PC-9 (cell line): ENCODE measurements at regions of chr3 and their contacts with region 1.

Region 1: GRCh38 chr3:192566706-192567290 is 160.5 kb downstream of the FGF12 start:
- DNase-seq: peak; percentile 73 to 79
- H3K4me3 ChIP-seq: no peak overlapping the region
- H3K27ac ChIP-seq: no peak overlapping the region
- H3K4me1 ChIP-seq: peaks cover 4% of the 10 kb centered on the region; the same call in 1 of the 2 replicates
- H3K27me3 ChIP-seq: no peaks in the 10 kb centered on the region
- CTCF ChIP-seq: peak; percentile 95

Region 2: DNA sequence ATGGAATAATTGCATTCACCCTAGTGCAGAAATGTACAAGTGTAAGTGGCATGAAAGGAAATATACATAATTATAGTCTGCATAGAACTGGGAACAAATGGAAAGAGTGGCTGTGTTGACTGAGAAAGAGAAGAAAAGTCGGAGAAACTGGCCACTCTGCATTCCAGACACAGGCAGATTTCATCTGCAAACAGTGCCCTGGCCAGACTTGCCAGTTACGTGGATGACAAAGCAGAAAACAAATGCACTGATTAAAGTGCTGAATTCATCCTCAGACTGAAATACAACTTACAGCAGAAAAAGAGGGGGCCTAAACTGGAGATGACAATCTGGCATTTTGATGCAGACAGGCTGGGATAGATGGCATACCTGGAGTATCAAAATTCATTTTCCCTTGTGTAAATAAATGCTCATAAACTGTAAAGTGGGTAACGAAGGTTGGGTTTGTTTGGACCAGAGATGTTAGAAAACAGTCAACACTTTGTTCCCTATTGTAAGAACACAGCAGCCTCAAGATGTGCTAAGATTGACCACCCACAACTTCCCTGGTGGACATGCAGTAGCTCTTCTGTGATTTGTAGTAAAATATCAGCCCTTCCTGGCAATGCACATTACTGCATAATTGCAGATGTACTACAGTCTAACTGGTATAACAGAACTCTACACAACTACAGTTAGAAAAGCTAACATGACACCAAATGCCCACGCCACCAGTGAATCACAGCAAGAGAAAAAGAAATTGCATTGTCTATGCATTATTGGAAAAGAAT is 30.9 kb after region 1 on chr3:
- CTCF ChIA-PET with region 1: no interaction called
- POLR2A ChIA-PET with region 1: no interaction called
- intact Hi-C with region 1: loop called (anchors 1 kb)
- DNase-seq: peak; percentile 84 to 92
- H3K4me3 ChIP-seq: peak overlapping the region; percentile 40
- H3K27ac ChIP-seq: peak overlapping the region; percentile 91
- H3K4me1 ChIP-seq: peaks cover 29% of the 10 kb centered on the region
- H3K27me3 ChIP-seq: no peaks in the 10 kb centered on the region
- CTCF ChIP-seq: no peak

Region 3: DNA sequence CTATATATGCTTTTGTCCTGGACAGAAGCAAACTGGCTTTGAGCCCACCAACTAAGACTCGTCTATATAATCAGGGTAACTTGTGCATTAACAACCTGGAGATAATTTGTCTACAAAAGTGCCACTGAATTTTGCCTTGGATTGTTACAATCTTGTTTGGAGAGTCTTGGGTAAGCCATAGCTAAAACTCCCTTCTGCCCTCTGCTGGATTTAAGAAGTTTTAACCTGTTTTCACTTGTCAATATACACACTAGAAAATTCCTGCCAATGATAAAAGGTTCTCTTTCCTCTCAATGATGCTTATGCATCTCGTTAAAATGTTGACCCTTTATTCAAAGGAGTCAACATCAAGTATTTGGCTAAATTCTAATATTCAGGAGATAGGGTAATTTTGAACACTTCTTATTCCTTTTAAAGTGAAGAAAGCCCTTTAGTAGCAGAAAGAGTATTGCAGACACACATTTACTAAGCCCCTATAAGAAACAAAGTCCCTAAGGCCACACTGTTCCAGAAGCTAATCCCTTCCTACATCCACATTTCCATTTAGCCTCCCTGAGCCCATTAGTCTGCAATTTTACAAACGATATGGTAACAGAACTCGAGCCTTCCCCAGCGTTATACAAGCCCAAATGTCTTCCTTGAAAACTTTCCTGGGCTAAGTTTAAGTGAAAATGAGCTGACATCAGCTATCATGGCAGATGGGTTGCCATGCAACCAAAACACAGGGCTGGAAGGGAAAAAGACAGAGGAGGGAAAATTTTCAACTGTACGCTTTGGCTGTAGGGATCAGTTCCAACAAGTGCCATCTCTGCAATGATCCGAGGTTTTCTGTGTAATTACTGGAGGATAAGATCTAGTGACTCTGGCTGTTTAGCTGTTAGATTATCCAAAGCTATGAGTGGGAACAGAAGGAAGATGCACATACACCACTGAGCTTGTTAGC is 236.4 kb after region 1 on chr3:
- CTCF ChIA-PET with region 1: no interaction called
- POLR2A ChIA-PET with region 1: no interaction called
- intact Hi-C with region 1: loop called (anchors 1 kb)
- DNase-seq: peak in 1 of 2 experiments; percentile 45
- H3K4me3 ChIP-seq: no peak overlapping the region
- H3K27ac ChIP-seq: no peak overlapping the region
- H3K4me1 ChIP-seq: no peaks in the 10 kb centered on the region
- H3K27me3 ChIP-seq: no peaks in the 10 kb centered on the region
- CTCF ChIP-seq: peak; percentile 88

Region 4: GRCh38 chr3:193040836-193041672 is 474.3 kb after region 1 on chr3:
- CTCF ChIA-PET with region 1: no interaction called
- POLR2A ChIA-PET with region 1: no interaction called
- intact Hi-C with region 1: loop called (anchors 1 kb)
- DNase-seq: peak in 1 of 2 experiments; percentile 58
- H3K4me3 ChIP-seq: no peak overlapping the region
- H3K27ac ChIP-seq: no peak overlapping the region
- H3K4me1 ChIP-seq: no peaks in the 10 kb centered on the region
- H3K27me3 ChIP-seq: no peaks in the 10 kb centered on the region
- CTCF ChIP-seq: peak; percentile 81

Region 5: GRCh38 chr3:193572426-193572908 is 1005.7 kb after region 1 on chr3:
- CTCF ChIA-PET with region 1: interaction called, 3 read pairs
- POLR2A ChIA-PET with region 1: no interaction called
- intact Hi-C with region 1: loop called (anchors 1 kb)
- DNase-seq: peak; percentile 69
- H3K4me3 ChIP-seq: no peak overlapping the region
- H3K27ac ChIP-seq: no peak overlapping the region
- H3K4me1 ChIP-seq: peaks cover 14% of the 10 kb centered on the region
- H3K27me3 ChIP-seq: no peaks in the 10 kb centered on the region
- CTCF ChIP-seq: peak; percentile 98